Prostate gland (tissue), 2 donors: ENCODE measurements at regions of chr17 and their contacts with region 1.

Region 1: DNA sequence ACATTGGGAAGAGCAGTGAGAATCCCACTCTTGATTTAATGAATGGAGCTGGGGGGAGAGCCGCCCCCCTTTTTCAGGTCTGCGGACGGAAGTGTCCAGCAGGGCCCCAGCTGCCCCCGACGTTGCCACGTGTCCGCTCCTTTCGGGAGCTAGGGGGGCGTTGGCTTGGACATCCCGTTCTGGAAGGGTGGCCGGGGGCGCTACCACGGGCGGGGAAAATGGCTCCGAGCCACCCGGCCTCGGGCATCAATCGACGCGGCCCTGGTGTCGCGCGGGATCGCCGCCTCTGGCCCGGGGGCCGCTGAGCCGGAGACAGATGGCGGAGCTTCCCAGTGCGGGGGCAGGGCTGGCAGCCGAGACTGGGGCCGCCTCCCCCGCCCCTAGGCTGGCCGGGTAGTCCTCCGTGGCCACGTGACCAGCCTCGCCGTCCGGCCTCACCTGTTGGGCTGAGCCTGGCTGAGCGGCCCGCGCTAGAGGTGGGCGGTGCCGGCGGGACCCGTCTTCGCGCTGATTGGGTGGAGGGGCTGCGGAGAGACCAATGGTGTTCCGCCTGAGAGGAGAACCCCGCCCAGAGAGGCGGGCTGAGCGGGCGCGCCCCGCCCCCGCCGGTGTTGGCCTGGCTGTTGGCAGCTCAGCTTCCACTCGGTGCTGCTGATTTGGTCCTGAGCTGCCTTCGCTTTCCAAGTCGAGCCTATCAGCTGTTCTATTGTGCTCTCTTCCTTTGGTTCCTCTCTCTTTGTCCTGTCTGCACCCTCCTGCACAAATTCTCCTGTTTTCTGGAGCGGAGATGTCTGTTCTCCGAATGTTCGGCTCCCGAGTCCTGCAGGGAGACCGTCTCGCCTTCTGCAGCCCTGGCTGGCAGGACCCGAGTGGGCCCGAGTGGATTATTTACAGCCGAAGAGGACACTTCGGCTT is 8.3 kb downstream of the HS3ST3B1 start:
- DNase-seq: peak; percentile 89
- H3K4me3 ChIP-seq: peak overlapping the region; percentile 38 to 44
- H3K27ac ChIP-seq: peak overlapping the region; percentile 60 to 65
- H3K4me1 ChIP-seq: no peaks in the 10 kb centered on the region
- H3K27me3 ChIP-seq: no peaks in the 10 kb centered on the region
- CTCF ChIP-seq: peak in 1 of 4 experiments; percentile 8
- POLR2A ChIP-seq: no peak

Region 2: DNA sequence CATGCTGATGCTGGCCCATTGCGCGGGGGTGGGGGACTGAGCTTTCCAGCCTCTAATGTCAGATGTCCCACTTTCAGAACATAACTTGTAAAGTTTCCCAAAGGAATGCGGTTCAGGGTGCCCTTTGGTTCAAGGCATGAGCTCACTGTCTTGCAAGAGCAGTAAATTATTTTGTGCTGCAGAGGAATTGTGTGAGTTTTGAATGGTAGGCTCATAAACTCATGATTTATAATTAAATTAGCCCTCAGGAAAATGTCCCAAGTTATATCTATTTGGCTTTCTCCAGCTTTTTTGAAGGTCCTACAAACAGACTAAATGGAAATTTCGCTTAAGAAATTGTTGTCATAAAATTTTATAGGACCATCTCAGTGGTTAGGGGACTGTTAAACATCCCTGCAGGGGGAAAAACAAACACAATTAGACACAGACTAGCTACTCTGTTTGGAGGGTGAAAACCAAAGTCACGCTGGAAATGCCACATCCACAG is 313.4 kb after region 1 on chr17:
- intact Hi-C with region 1: no loop called
- DNase-seq: peak; percentile 21
- H3K4me3 ChIP-seq: no peak overlapping the region
- H3K27ac ChIP-seq: no peak overlapping the region
- H3K4me1 ChIP-seq: no peaks in the 10 kb centered on the region
- H3K27me3 ChIP-seq: no peaks in the 10 kb centered on the region
- CTCF ChIP-seq: no peak
- POLR2A ChIP-seq: no peak

Region 3: GRCh38 chr17:15157051-15157450 is 847.8 kb after region 1 on chr17:
- intact Hi-C with region 1: loop called (anchors 5 kb)
- DNase-seq: no peak
- H3K4me3 ChIP-seq: no peak overlapping the region
- H3K27ac ChIP-seq: no peak overlapping the region
- H3K4me1 ChIP-seq: no peaks in the 10 kb centered on the region
- H3K27me3 ChIP-seq: no peaks in the 10 kb centered on the region
- CTCF ChIP-seq: no peak
- POLR2A ChIP-seq: no peak